ENCODE measurements at regions of chr4 and their contacts with region 1.

Region 1: GRCh38 chr4:48578132-48578968 is 88.3 kb downstream of the ZAR1 start:
- DNase-seq: no peak
- ATAC-seq: peak; percentile 92
- H3K4me3 ChIP-seq: no peak overlapping the region
- H3K27ac ChIP-seq: no peak overlapping the region
- H3K4me1 ChIP-seq: no peaks in the 10 kb centered on the region
- H3K27me3 ChIP-seq: no peaks in the 10 kb centered on the region

Region 2: DNA sequence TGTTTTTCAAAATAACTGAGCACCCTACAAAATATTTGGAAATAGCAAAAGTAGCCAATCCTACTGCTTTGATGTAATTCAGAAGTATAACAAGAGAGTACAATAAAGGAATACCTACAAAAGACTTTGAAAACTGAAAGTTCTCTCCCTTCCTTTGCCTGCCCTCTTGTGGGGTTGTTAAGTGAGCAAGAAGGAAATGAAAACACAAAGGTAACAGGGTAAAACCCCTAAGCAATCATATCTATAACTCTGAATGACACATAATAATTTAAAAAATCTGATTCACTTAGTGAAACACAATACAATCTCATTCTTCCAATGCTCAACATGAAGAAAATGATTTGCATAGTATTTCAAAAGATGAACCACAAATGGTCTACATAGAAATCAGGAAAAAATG is 103.5 kb after region 1 on chr4:
- intact Hi-C with region 1: loop called in 1 of 2 experiments (anchors 10 kb)
- DNase-seq: no peak
- ATAC-seq: no peak
- H3K4me3 ChIP-seq: no peak overlapping the region
- H3K27ac ChIP-seq: no peak overlapping the region
- H3K4me1 ChIP-seq: peaks cover 0 to 2% of the 10 kb centered on the region in 2 donors
- H3K27me3 ChIP-seq: no peaks in the 10 kb centered on the region

Region 3: DNA sequence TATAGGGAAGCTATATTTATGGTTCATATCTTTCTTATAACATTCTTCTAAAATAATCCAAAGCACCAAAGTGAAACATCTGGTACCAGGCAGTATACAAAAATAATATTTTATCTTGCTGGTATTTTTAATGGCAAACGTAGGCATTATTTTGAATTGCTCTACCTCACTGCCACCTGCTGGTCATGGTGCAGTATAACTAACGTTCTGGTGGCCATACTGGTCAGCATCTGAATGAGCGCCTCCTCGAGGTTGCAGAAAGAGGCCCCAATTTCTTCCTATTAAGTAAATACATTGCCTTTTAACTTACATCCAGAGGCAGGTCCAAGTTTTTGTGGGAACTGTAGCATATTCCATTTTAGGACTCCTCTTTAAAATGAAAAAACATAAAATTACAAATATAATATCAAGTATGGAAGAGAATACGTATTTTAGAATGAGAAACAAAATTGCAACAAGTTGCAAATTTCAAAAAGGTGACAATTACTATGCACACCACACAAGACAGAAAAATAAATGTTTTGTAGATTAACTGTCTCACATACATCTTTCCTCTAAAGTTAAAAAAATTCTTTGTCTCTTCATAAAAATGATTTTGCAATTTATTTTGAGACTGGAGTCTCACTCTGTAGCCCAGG is 384.8 kb after region 1 on chr4:
- intact Hi-C with region 1: loop called (anchors 2 kb)
- DNase-seq: peak; percentile 77 to 78
- ATAC-seq: peak; percentile 81
- H3K4me3 ChIP-seq: no peak overlapping the region
- H3K27ac ChIP-seq: no peak overlapping the region
- H3K4me1 ChIP-seq: no peaks in the 10 kb centered on the region
- H3K27me3 ChIP-seq: no peaks in the 10 kb centered on the region

Measured in aorta (tissue), 5 donors.